ENCODE measurements at regions of chr12 and their contacts with region 1.

Region 1: DNA sequence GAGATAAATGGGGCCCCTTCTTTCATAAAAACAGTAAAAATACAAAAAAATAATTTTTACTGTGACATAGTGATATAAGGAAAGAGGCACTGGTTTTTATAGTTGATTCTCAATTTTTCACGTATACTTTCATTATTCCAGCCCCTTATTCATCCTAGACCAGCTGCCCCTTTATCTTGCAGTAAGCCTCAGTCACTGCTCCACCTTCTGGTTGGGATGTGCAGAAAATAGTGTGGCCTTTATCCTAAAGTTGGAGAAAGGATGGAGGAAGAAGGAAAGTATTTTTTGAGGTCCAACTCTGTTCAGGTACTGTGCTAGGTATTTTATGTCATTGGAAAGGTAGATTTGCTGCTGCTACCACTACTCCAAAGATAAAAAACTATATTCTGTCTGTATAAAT is 172.7 kb downstream of the ANO6 start:
- DNase-seq: no peak

Region 2: GRCh38 chr12:45170456-45171042 is 218.0 kb before region 1 on chr12:
- intact Hi-C with region 1: loop called (anchors 5 kb)
- DNase-seq: peak; percentile 79

Region 3: GRCh38 chr12:45268672-45269411 is 119.7 kb before region 1 on chr12:
- intact Hi-C with region 1: loop called (anchors 5 kb)
- DNase-seq: peak; percentile 88

Measured in cardiac septum (tissue), 1 donor.